HEK293 (cell line): ENCODE measurements at regions of chr6 and their contacts with region 1.

Region 1: DNA sequence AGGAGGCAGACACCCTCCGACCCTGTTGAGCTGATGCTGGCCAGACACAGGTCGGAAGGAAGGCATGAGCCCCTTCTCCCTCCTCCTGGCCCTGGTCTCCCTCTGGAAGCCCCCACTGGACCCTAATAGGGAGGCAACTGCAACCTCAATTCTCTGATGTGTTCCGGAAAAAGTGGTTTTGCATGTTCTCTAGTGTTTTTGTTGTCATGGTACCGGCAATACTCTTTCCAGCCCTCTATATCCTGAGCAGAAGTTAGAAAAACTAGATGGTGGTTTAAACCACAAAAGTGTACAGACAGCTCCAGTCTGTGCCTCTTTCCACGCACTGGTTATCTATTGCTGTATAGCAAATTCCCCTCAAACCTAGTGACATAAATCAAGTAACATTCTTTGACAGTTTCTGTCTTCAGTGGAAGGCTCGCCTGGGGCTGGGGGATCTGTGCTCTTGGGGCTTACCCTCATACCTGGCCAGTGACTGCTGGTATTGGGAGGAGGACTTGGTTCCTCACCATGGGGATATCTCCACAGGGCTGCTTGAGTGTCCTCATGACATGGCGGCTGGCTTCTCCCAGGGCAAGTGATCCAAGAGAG is 37.0 kb downstream of the SYTL3 start:
- H3K4me3 ChIP-seq: no peak overlapping the region
- H3K27ac ChIP-seq: no peak overlapping the region
- H3K4me1 ChIP-seq: no peaks in the 10 kb centered on the region
- CTCF ChIP-seq: no peak

Region 2: DNA sequence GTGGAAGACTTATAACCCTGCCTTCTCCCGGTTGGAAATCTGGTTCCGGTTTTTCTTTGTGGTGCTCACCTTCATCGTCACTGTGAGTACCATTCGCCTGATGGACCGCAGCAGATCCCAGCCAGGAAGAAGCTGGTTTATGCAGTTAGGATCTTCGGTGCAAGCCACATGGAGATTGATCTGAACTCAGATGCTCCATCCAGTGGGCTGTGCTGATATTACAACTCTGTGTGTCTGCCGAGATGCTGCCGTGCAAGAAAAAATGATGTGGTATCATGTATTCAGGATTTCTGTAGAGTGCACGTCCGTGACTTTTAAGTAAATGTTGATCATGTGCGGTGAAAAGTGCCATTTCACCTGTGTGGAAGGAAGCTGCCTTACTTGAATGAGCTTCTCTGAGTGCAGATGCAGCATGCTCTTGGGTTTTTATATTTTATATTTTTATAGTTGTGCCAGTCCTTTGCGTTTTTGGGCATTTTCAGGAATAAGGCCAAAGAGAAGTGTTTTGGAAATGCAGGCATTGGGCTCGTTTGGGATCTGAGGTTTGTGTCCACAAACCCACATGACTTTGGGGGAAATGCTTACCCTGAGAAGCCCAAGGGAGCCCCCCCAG is 81.5 kb before region 1 on chr6:
- CTCF ChIA-PET with region 1: interaction called, 10 read pairs
- POLR2A ChIA-PET with region 1: no interaction called
- H3K4me3 ChIP-seq: no peak overlapping the region
- H3K27ac ChIP-seq: no peak overlapping the region
- H3K4me1 ChIP-seq: no peaks in the 10 kb centered on the region
- CTCF ChIP-seq: no peak; the same call in 1 of the 2 replicates

Region 3: GRCh38 chr6:158644231-158645063 is 42.4 kb before region 1 on chr6 and contains the start of gene DYNLT1:
- CTCF ChIA-PET with region 1: interaction called, 22 read pairs
- POLR2A ChIA-PET with region 1: interaction called, 12 read pairs
- H3K4me3 ChIP-seq: peak within 1 kb of the TSS; percentile 80
- H3K27ac ChIP-seq: peak within 1 kb of the TSS; percentile 79
- H3K4me1 ChIP-seq: peaks cover 14% of the 10 kb centered on the region
- CTCF ChIP-seq: 0 out of 2 replicates have a peak, but pooled peaks have one; percentile 5

Region 4: GRCh38 chr6:158660333-158660754 is 26.5 kb before region 1 on chr6:
- CTCF ChIA-PET with region 1: interaction called, 75 read pairs
- POLR2A ChIA-PET with region 1: interaction called, 3 read pairs
- H3K4me3 ChIP-seq: no peak overlapping the region
- H3K27ac ChIP-seq: no peak overlapping the region
- H3K4me1 ChIP-seq: no peaks in the 10 kb centered on the region
- CTCF ChIP-seq: 0 out of 2 replicates have a peak, but pooled peaks have one; percentile 45

Region 5: DNA sequence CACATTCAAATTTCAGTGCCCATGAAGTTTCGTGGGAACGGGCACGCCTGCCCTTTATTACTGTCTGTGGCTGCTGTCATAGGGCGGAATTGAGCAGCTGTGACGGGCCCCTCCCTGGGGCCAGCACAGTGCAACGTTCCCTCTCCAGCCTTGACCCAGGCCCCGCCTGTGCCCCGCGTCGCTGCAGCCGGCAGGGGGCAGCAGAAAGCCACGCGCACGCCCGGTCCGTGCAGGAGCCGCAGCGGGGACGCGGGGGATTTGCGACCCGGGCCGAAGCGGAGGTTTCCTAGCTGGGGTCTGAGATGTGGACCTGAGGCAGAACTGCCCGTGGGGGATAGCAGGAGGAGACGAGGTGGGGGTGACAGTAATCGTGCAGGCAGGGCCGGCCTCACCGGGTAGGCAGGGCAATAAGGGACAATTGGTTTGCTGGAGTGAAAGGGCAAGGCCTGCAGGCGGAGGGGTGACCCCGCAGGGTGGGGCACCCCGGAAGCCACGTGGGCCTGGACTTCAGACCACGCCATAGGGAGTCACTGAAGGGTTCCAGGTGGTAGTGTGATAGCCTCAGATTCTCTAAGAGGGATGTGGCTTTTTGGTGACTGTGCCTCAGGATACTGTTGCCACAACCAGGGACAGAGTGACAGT is 17.4 kb after region 1 on chr6:
- CTCF ChIA-PET with region 1: interaction called, 22 read pairs
- POLR2A ChIA-PET with region 1: interaction called, 3 read pairs
- H3K4me3 ChIP-seq: peak overlapping the region; percentile 41
- H3K27ac ChIP-seq: no peak overlapping the region
- H3K4me1 ChIP-seq: peaks cover 10% of the 10 kb centered on the region; the same call in 1 of the 2 replicates
- CTCF ChIP-seq: peak; percentile 99

Region 6: GRCh38 chr6:158972241-158973233 is 285.7 kb after region 1 on chr6:
- CTCF ChIA-PET with region 1: interaction called, 33 read pairs
- POLR2A ChIA-PET with region 1: no interaction called
- H3K4me3 ChIP-seq: no peak overlapping the region
- H3K27ac ChIP-seq: no peak overlapping the region
- H3K4me1 ChIP-seq: no peaks in the 10 kb centered on the region
- CTCF ChIP-seq: no peak